CD4-positive, alpha-beta memory T cell (primary cell): ENCODE measurements at regions of chr14 and their contacts with region 1.

Region 1: GRCh38 chr14:102086972-102087761 is at the start of gene HSP90AA1:
- DNase-seq: peak; percentile 90 to 95 (median 94)
- H3K4me3 ChIP-seq: peak within 1 kb of the TSS; percentile 80 to 85
- H3K4me3 Mint-ChIP-seq: peak within 1 kb of the TSS; percentile 91 to 99 (median 97)
- H3K27ac ChIP-seq: peak within 1 kb of the TSS; percentile 94
- H3K27ac Mint-ChIP-seq: peak within 1 kb of the TSS; percentile 93 to 99 (median 97)
- H3K4me1 ChIP-seq: peaks cover 51% of the 10 kb centered on the region
- H3K4me1 Mint-ChIP-seq: peaks cover 46 to 68% (median 56%) of the 10 kb centered on the region in 4 donors
- H3K27me3 ChIP-seq: no peaks in the 10 kb centered on the region
- H3K27me3 Mint-ChIP-seq: no peaks in the 10 kb centered on the region
- total RNA-seq, gene HSP90AA1: 275 to 297 TPM

Region 2: GRCh38 chr14:101721951-101722661 is 365.1 kb before region 1 on chr14:
- CTCF ChIA-PET with region 1: no interaction called
- POLR2A ChIA-PET with region 1: no interaction called
- intact Hi-C with region 1: loop called (anchors 5 kb)
- DNase-seq: peak; percentile 90 to 93 (median 91)
- H3K4me3 ChIP-seq: peak overlapping the region in 1 of 2 donors; percentile 55
- H3K4me3 Mint-ChIP-seq: peak overlapping the region; percentile 66 to 92 (median 82)
- H3K27ac ChIP-seq: peak overlapping the region; percentile 84
- H3K27ac Mint-ChIP-seq: peak overlapping the region; percentile 92 to 100 (median 97)
- H3K4me1 ChIP-seq: peaks cover 61% of the 10 kb centered on the region
- H3K4me1 Mint-ChIP-seq: peaks cover 35 to 69% (median 46%) of the 10 kb centered on the region in 4 donors
- H3K27me3 ChIP-seq: no peaks in the 10 kb centered on the region
- H3K27me3 Mint-ChIP-seq: no peaks in the 10 kb centered on the region

Region 3: GRCh38 chr14:101947906-101948665 is 139.1 kb before region 1 on chr14:
- CTCF ChIA-PET with region 1: no interaction called
- POLR2A ChIA-PET with region 1: no interaction called
- intact Hi-C with region 1: loop called (anchors 1 kb)
- DNase-seq: peak; percentile 99 to 100 (median 100)
- H3K4me3 ChIP-seq: peak overlapping the region; percentile 87 to 98
- H3K4me3 Mint-ChIP-seq: peak overlapping the region; percentile 92 to 99 (median 96)
- H3K27ac ChIP-seq: peak overlapping the region; percentile 94
- H3K27ac Mint-ChIP-seq: peak overlapping the region; percentile 99 to 100 (median 100)
- H3K4me1 ChIP-seq: peaks cover 13% of the 10 kb centered on the region
- H3K4me1 Mint-ChIP-seq: peaks cover 6 to 31% (median 21%) of the 10 kb centered on the region in 4 donors
- H3K27me3 ChIP-seq: peaks cover 5% of the 10 kb centered on the region
- H3K27me3 Mint-ChIP-seq: peaks cover 9 to 16% of the 10 kb centered on the region in 2 donors

Region 4: GRCh38 chr14:102050625-102051024 is 36.5 kb before region 1 on chr14:
- CTCF ChIA-PET with region 1: no interaction called
- POLR2A ChIA-PET with region 1: no interaction called
- intact Hi-C with region 1: loop called (anchors 5 kb)
- DNase-seq: no peak
- H3K4me3 ChIP-seq: no peak overlapping the region
- H3K4me3 Mint-ChIP-seq: no peak overlapping the region
- H3K27ac ChIP-seq: no peak overlapping the region
- H3K27ac Mint-ChIP-seq: no peak overlapping the region
- H3K4me1 ChIP-seq: no peaks in the 10 kb centered on the region
- H3K4me1 Mint-ChIP-seq: no peaks in the 10 kb centered on the region
- H3K27me3 ChIP-seq: no peaks in the 10 kb centered on the region
- H3K27me3 Mint-ChIP-seq: no peaks in the 10 kb centered on the region

Region 5: GRCh38 chr14:102139248-102140026 is 52.3 kb after region 1 on chr14 and contains the start of gene WDR20:
- CTCF ChIA-PET with region 1: interaction called, 3 read pairs
- POLR2A ChIA-PET with region 1: interaction called, 7 read pairs
- intact Hi-C with region 1: loop called (anchors 1 kb)
- DNase-seq: peak; percentile 98 to 100 (median 100)
- H3K4me3 ChIP-seq: peak within 1 kb of the TSS; percentile 65 to 91
- H3K4me3 Mint-ChIP-seq: peak within 1 kb of the TSS; percentile 97 to 99 (median 98)
- H3K27ac ChIP-seq: peak within 1 kb of the TSS; percentile 92
- H3K27ac Mint-ChIP-seq: peak within 1 kb of the TSS; percentile 95 to 98 (median 97)
- H3K4me1 ChIP-seq: peaks cover 30% of the 10 kb centered on the region
- H3K4me1 Mint-ChIP-seq: peaks cover 19 to 25% (median 21%) of the 10 kb centered on the region in 4 donors
- H3K27me3 ChIP-seq: no peaks in the 10 kb centered on the region
- H3K27me3 Mint-ChIP-seq: no peaks in the 10 kb centered on the region
- total RNA-seq, gene WDR20: 56.8 to 57.9 TPM